ENCODE measurements at regions of chr4 and their contacts with region 1.

Region 1: DNA sequence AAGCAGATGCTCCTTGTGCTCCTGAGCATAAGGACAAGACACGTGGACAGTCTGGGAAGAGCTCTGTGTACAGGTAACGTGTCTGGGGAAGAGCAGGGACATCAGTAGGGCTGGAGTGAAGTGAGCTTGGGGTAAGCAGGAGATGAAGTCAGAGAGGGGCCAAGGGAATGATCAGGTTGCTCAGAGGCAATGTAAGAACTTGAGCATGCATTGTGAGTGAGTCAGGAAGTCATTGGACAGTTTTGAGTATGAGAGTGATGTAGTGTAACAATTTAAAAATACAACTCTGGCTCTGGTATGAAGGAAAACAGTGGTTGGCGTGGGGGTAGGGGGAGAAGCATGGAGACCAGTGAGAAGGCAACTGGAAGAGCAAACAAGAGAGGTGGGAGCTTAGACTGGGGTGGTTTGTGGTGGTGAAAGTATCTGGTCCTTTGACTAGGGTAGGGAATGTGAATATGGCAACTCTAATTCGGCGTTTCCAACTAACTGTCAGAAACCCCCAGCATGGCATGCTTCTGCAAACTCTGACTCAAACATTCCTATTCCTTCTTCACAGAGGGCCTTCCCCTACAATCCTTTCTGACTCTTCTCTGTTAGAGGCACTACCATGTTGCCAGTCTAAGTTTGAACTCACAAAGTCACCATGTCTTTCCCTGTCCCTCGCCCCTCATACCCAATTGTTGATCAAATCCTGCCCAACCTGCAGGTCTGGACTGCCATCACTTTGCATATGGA is 57.2 kb downstream of the STBD1 start:
- DNase-seq: no peak
- H3K4me3 ChIP-seq: no peak overlapping the region
- H3K27me3 ChIP-seq: peaks cover 1% of the 10 kb centered on the region; the same call in 1 of the 2 replicates
- CTCF ChIP-seq: no peak

Region 2: GRCh38 chr4:76377911-76378310 is 14.2 kb after region 1 on chr4:
- CTCF ChIA-PET with region 1: interaction called, 13 read pairs
- POLR2A ChIA-PET with region 1: no interaction called
- DNase-seq: no peak
- H3K4me3 ChIP-seq: no peak overlapping the region
- H3K27me3 ChIP-seq: peaks cover 1% of the 10 kb centered on the region; the same call in 1 of the 2 replicates
- CTCF ChIP-seq: peak; percentile 66

Region 3: DNA sequence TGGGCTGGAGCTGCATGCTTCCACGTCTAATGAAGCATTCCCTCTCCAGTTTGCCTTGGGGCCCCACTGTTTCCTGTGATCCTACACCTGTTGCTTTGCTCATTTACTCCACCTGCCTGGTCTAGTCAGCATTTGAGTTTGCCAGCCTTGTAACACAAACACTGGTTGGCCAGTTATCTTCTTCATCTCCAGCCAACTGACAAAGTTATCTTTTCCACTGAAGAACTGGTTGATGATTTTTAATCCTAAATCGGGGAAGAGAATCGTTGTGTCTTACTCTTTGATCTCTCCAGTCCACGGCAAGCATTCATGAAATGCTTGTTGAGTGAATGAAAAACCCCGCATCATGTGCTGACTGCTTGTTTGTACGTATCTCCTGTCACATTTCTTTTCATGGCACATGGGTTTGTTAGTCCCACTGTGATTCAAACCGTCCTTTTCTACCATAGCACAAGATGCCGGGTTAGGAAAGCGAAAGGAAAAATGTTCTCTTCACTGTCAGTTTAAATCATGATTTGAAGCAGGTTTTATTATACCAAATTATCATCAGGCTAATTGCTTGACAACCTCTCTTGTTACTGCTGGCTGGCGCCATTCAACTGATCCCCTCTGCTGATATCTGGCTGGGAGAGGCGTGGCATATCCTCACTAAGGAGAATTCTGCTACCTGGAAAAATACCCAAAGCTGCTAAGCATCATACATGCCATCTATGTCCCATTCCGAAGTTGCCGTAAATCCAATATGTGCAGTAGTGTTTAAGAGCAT is 216.1 kb after region 1 on chr4:
- CTCF ChIA-PET with region 1: no interaction called
- POLR2A ChIA-PET with region 1: no interaction called
- DNase-seq: no peak
- H3K4me3 ChIP-seq: no peak overlapping the region
- H3K27me3 ChIP-seq: no peaks in the 10 kb centered on the region
- CTCF ChIP-seq: no peak